K562 (cell line): ENCODE measurements at regions of chr10 and their contacts with region 1.

Region 1: DNA sequence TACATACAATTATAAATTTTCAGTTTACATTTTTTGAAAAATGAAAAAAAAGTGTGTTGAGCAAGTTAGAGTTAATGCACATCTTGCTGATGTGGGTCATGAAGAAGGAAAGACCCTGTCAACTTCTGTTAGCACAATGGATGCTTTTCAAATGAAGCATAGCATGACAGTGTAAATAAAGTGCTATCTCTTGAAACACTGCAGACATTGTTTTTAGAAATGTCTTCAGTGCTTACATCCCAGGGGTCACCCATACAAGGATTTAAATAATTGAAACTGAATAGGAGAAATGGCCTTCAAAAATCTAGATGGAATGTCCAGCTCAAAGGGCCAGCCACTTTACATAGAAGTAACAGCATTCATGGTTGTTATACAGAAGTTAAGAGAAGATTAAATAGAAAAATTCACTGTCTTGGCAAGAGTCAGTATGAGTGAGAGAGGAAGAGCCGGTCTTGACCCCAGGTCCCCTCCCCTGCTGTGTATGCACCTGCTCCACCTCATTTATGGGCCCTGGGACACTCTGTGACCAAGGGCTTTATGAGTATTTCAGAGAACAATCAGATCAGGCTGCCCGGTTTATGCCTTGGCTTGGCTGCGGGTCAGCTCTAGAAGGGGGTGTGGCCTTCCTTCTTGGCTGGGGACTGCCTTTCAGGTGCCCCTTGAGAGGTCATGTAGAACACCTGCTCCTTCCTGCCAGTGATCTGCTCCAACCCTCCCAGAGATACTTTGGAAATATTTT is 237.7 kb upstream of the TMEM72 start:
- DNase-seq: no peak
- ATAC-seq: no peak
- H3K4me3 ChIP-seq: no peak overlapping the region
- H3K27ac ChIP-seq: no peak overlapping the region
- H3K4me1 ChIP-seq: no peaks in the 10 kb centered on the region
- H3K27me3 ChIP-seq: no peaks in the 10 kb centered on the region
- CTCF ChIP-seq: no peak
- EP300 ChIP-seq: no peak
- POLR2A ChIP-seq: no peak
- RAD21 ChIP-seq: no peak

Region 2: DNA sequence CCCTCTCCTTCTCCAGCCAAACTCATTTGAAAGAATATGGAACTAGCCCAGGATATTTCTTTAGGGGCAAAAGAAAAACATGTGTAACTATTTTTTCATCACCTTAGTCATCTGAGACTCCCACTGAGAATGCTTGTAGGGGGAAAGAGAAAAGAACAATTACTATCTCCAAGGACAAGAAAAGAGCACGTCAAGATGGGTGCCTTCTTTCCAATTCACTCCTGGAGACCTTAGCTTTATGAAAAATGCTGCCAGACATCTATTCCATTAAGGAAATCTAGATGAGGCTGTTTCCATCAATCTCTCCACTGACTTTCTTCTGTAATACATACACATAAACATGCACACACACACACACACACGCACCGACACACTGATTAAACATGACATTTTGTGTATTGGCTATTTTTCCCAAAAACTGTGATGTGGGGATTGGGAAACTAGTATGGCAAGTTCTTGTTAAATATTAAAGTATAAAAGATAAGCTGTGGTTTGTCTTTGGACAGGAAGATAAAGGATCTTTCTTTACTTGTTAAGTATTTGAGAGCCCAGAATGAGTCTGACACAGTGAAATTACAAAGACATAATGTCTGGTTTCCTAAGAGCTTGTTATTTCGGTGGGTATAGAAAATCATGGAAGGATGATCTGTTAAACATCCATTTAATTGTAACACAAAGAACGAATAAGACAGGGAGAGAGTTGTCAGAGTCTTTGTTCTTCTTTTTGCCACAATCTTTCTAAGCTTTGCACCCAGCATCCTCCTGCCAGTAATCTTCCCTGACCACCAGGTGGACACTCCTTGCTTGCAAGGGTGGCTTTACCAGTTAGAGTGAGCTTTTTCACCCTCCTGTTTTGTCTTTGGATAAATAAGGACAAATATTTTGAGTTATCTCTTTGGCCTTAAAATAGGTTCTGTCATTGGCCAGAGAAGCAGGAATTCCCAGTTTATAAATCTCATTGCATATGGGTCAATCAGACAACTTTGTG is 60.4 kb after region 1 on chr10:
- CTCF ChIA-PET with region 1: no interaction called
- POLR2A ChIA-PET with region 1: no interaction called
- in situ Hi-C with region 1: no loop called
- intact Hi-C with region 1: loop called (anchors 2 kb)
- DNase-seq: no peak
- ATAC-seq: no peak
- H3K4me3 ChIP-seq: no peak overlapping the region
- H3K27ac ChIP-seq: no peak overlapping the region
- H3K4me1 ChIP-seq: no peaks in the 10 kb centered on the region
- H3K27me3 ChIP-seq: no peaks in the 10 kb centered on the region
- CTCF ChIP-seq: no peak
- EP300 ChIP-seq: no peak
- POLR2A ChIP-seq: no peak
- RAD21 ChIP-seq: no peak

Region 3: GRCh38 chr10:45080331-45080730 is 406.9 kb after region 1 on chr10:
- CTCF ChIA-PET with region 1: no interaction called
- POLR2A ChIA-PET with region 1: no interaction called
- in situ Hi-C with region 1: no loop called
- intact Hi-C with region 1: no loop called
- DNase-seq: no peak
- ATAC-seq: no peak
- H3K4me3 ChIP-seq: no peak overlapping the region
- H3K27ac ChIP-seq: no peak overlapping the region
- H3K4me1 ChIP-seq: 0 out of 5 replicates have a peak, but pooled peaks cover 0 to under 1% of the 10 kb centered on the region in 2 experiments
- H3K27me3 ChIP-seq: peaks cover 0 to 5% of the 10 kb centered on the region in 2 experiments; a peak in 1 of 5 replicates
- CTCF ChIP-seq: no peak
- EP300 ChIP-seq: no peak
- POLR2A ChIP-seq: no peak
- RAD21 ChIP-seq: no peak